Activated B cell treated with CpG ODN at 0.5 μM for 24 hours (primary cell): ENCODE measurements at regions of chr17 and their contacts with region 1.

Region 1: DNA sequence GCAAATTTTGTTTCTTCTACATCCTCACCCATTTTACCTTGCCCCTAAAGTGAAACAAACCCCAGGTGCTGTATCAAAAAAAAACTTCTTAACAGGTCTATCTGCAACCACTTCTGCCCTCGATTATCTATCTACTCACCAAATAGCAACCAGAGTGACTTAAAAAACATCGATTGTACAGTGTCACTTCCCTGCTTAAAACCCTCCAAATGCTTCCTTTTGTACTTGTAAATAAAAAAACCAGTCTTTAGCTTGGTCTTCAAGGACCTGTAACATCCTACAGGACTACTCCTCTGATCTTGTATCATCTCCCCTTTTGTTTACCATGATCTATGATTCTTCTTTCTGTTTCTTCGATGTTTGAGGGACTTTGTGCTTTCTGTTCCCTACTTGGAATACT is 82.7 kb upstream of the CORO6 start:
- DNase-seq: no peak
- ATAC-seq: no peak
- H3K4me3 Mint-ChIP-seq: peak overlapping the region; percentile 57
- H3K27ac Mint-ChIP-seq: peak overlapping the region; percentile 98
- H3K4me1 Mint-ChIP-seq: peaks cover 70% of the 10 kb centered on the region
- H3K27me3 Mint-ChIP-seq: no peaks in the 10 kb centered on the region
- CTCF ChIP-seq: no peak

Region 2: GRCh38 chr17:29664743-29665480 is 40.5 kb before region 1 on chr17:
- CTCF ChIA-PET with region 1: no interaction called
- POLR2A ChIA-PET with region 1: no interaction called
- intact Hi-C with region 1: no loop called
- DNase-seq: no peak
- ATAC-seq: peak; percentile 66
- H3K4me3 Mint-ChIP-seq: no peak overlapping the region
- H3K27ac Mint-ChIP-seq: peak overlapping the region; percentile 70
- H3K4me1 Mint-ChIP-seq: peaks cover 18% of the 10 kb centered on the region
- H3K27me3 Mint-ChIP-seq: no peaks in the 10 kb centered on the region
- CTCF ChIP-seq: no peak

Region 3: GRCh38 chr17:29682054-29682453 is 23.3 kb before region 1 on chr17:
- CTCF ChIA-PET with region 1: interaction called, 6 read pairs
- POLR2A ChIA-PET with region 1: interaction called, 27 read pairs
- intact Hi-C with region 1: no loop called
- DNase-seq: no peak
- ATAC-seq: peak; percentile 93
- H3K4me3 Mint-ChIP-seq: peak overlapping the region; percentile 21
- H3K27ac Mint-ChIP-seq: peak overlapping the region; percentile 81
- H3K4me1 Mint-ChIP-seq: peaks cover 27% of the 10 kb centered on the region
- H3K27me3 Mint-ChIP-seq: no peaks in the 10 kb centered on the region
- CTCF ChIP-seq: no peak

Region 4: GRCh38 chr17:29753845-29754439 is 48.6 kb after region 1 on chr17:
- CTCF ChIA-PET with region 1: no interaction called
- POLR2A ChIA-PET with region 1: interaction called, 8 read pairs
- intact Hi-C with region 1: loop called (anchors 1 kb)
- DNase-seq: no peak
- ATAC-seq: peak; percentile 80
- H3K4me3 Mint-ChIP-seq: peak overlapping the region; percentile 5
- H3K27ac Mint-ChIP-seq: peak overlapping the region; percentile 77
- H3K4me1 Mint-ChIP-seq: peaks cover 58% of the 10 kb centered on the region
- H3K27me3 Mint-ChIP-seq: no peaks in the 10 kb centered on the region
- CTCF ChIP-seq: no peak

Region 5: DNA sequence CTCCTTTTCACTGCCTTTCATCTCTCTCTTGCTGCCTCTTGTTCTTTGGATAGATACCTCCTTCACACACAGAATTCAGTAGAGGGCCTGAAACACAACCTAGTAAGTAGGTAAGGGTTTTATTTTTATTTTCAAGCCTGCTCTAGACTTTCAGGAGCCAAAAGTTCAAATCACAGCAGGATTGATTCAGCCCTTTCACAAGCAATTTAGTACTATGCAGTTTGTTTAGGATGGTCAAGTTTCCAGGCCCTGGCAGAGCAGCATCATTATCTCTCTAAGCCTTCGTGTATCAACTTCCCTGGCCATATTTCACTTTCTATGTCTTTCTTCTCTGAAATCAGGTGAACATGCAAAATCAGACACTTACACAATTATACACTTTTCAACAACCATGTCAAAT is 66.2 kb after region 1 on chr17:
- CTCF ChIA-PET with region 1: no interaction called
- POLR2A ChIA-PET with region 1: interaction called, 7 read pairs
- intact Hi-C with region 1: loop called (anchors 1 kb)
- DNase-seq: no peak
- ATAC-seq: no peak
- H3K4me3 Mint-ChIP-seq: no peak overlapping the region
- H3K27ac Mint-ChIP-seq: peak overlapping the region; percentile 90
- H3K4me1 Mint-ChIP-seq: peaks cover 18% of the 10 kb centered on the region
- H3K27me3 Mint-ChIP-seq: no peaks in the 10 kb centered on the region
- CTCF ChIP-seq: no peak